Activated CD8-positive, alpha-beta T cell treated with anti-CD3 and anti-CD28 coated beads for 36 hours (primary cell): ENCODE measurements at regions of chr12 and their contacts with region 1.

Region 1: DNA sequence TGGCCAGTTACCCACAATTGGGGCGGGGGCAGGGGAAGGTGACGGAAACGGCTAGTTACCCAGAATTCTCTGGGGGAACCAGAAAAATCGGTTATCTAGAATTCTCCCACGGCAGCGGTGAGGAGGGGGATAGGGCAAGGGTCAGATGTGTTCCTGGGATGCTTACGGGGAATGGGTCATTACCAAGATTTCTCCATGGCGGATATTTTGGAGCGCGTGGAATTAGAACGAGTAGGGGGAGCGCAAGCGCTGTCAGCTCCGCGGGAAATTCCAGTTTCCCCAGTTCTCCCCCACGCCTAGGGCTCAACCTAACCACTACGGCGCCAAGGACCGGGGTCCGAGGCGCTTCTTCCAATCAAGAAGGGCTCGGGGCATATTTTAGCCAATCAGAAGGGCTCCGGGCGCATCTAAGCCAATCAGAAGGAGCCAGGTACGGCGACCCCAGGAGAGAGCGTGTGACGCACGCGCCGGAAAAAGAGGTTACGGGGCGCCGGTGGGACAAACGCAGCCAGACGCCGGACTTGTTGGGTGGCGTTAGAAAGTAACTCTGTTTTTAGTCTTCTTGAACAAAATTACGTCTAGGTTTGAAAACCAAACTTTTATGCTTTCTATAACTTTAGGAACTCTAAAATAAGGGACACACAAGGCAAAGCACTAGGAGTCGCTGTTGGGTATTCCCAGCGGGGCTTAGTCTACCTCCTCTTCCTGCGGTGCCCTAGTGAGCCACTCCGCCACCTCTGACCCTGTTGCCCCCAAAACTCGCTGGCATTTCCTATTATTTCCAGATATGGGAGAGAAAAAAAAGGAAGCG is at the start of gene PAN2:
- DNase-seq: peak; percentile 98
- ATAC-seq: peak; percentile 87
- H3K4me3 Mint-ChIP-seq: peak within 1 kb of the TSS; percentile 86
- H3K27ac Mint-ChIP-seq: peak within 1 kb of the TSS; percentile 99
- H3K4me1 Mint-ChIP-seq: peaks cover 40% of the 10 kb centered on the region
- H3K27me3 Mint-ChIP-seq: no peaks in the 10 kb centered on the region
- CTCF ChIP-seq: peak; percentile 61
- total RNA-seq, gene PAN2: 55.7 to 69.0 TPM

Region 2: DNA sequence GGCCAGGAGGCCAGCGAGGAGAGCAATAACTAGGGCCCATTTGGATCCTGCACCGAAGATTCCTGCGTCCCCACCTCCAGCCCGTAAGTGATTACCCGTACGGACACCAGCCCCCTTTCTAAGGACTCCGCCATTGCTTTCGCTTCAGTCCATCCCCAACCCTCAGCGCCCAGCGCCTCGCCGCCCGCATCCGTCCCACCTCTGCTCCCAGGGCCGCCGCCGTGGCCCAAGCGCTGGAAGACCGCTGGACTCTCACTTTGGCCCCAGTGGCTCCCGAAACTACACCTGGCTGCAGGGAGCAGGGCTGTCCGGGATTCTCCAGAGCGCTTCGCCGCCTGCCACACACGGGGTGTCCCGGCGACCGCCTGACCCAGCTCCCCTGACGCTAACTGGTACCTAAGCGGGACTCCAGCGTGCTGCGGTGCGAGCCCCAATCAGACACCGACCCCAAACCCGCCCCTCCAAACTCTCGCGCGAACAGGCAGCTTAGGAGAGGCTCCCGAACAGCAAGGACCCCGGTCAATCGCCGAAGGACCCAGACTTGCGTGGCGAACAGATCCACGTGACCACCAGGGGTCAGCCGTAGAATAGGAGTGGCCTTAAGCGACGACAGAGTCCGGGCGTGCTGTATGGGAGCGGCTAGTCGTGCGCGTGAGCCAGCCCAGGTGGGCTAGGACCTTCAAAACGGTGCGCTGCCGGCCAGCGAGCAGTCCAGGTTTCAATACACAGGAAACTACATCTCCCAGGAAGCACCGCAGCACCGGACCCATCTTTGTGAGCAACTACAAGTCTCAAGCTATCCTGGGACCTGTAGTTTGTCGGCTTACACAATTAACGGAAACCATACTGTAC is 18.0 kb before region 1 on chr12 and contains the start of gene CNPY2:
- CTCF ChIA-PET with region 1: interaction called, 4 read pairs
- POLR2A ChIA-PET with region 1: interaction called, 28 read pairs
- intact Hi-C with region 1: no loop called
- DNase-seq: peak; percentile 98
- ATAC-seq: peak; percentile 91
- H3K4me3 Mint-ChIP-seq: peak within 1 kb of the TSS; percentile 85
- H3K27ac Mint-ChIP-seq: peak within 1 kb of the TSS; percentile 92
- H3K4me1 Mint-ChIP-seq: peaks cover 9% of the 10 kb centered on the region
- H3K27me3 Mint-ChIP-seq: no peaks in the 10 kb centered on the region
- CTCF ChIP-seq: no peak
- total RNA-seq, gene CNPY2: 81.0 to 81.7 TPM

Region 3: DNA sequence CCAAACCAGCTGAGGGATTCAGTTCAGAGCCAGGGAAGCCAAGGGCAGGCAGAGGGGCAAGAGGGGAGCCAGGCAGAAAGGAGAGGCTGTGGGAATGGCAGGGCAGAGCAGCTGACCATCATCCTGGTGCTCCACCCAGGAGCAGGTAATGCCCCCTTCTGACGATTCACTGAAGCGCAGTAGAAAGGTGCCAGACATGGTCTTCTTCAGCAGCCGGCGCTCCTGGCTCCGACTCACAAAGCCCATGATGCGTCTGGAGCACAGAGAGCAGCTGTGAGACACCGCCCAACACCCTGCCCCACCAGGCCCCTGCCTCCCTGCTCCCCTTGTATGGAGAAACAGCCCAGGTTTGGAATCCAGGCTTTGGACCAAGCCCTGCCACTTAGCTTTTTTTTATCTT is 12.8 kb after region 1 on chr12:
- CTCF ChIA-PET with region 1: interaction called, 5 read pairs
- POLR2A ChIA-PET with region 1: interaction called, 42 read pairs
- intact Hi-C with region 1: no loop called
- DNase-seq: peak; percentile 51
- ATAC-seq: peak; percentile 46
- H3K4me3 Mint-ChIP-seq: no peak overlapping the region
- H3K27ac Mint-ChIP-seq: no peak overlapping the region
- H3K4me1 Mint-ChIP-seq: no peaks in the 10 kb centered on the region
- H3K27me3 Mint-ChIP-seq: no peaks in the 10 kb centered on the region
- CTCF ChIP-seq: peak; percentile 58

Region 4: GRCh38 chr12:56387152-56387736 is 53.4 kb after region 1 on chr12:
- CTCF ChIA-PET with region 1: no interaction called
- POLR2A ChIA-PET with region 1: no interaction called
- intact Hi-C with region 1: no loop called
- DNase-seq: no peak
- ATAC-seq: no peak
- H3K4me3 Mint-ChIP-seq: no peak overlapping the region
- H3K27ac Mint-ChIP-seq: no peak overlapping the region
- H3K4me1 Mint-ChIP-seq: no peaks in the 10 kb centered on the region
- H3K27me3 Mint-ChIP-seq: no peaks in the 10 kb centered on the region
- CTCF ChIP-seq: no peak

Region 5: DNA sequence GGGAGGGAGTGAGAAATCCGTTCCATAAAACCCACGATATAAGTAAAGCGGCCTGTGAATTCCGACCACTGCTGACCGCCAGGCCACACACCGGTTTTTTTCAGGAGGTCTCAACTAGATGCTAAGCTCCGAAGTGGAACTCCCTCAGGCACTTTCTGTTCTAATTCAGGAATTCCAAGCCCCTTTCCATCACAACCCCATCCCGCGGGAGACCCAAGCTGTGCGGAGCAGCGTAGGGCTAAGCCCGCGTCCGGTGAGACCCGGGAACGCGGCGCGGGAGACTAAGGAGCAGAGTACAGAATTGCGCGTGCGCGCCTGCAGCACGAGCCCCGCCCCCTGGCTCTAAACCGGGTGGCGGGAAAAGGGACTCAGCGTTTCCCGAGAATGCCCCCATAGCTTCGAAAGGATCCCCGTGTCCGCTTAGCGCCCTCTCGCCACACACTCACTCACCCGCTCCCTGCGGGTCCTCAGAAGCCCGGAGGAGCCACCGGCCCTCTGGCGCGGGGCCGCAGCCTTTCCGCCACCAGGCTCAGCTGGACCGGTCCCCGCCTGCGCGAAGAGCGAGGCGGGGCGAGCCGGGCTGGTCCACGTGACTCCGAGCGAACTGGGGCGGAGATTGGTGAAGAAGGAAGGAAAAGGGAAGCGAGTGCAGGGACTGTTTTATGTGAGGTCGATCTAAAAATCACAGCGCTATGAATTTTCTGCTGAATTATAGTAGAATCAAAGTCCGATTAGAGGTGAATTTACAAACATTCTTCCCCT is 115.2 kb after region 1 on chr12 and contains the start of gene TIMELESS:
- CTCF ChIA-PET with region 1: interaction called, 3 read pairs
- POLR2A ChIA-PET with region 1: interaction called, 10 read pairs
- intact Hi-C with region 1: no loop called
- DNase-seq: peak; percentile 86
- ATAC-seq: peak; percentile 97
- H3K4me3 Mint-ChIP-seq: peak within 1 kb of the TSS; percentile 88
- H3K27ac Mint-ChIP-seq: peak within 1 kb of the TSS; percentile 93
- H3K4me1 Mint-ChIP-seq: peaks cover 24% of the 10 kb centered on the region
- H3K27me3 Mint-ChIP-seq: no peaks in the 10 kb centered on the region
- CTCF ChIP-seq: no peak
- total RNA-seq, gene TIMELESS: 48.7 to 49.2 TPM